Naive thymus-derived CD4-positive, alpha-beta T cell (primary cell): ENCODE measurements at regions of chr6 and their contacts with region 1.

Region 1: GRCh38 chr6:34757687-34758274 is 476 bp downstream of the SNRPC start:
- DNase-seq: no peak
- ATAC-seq: no peak
- H3K4me3 ChIP-seq: peak overlapping the region; percentile 94
- H3K4me3 Mint-ChIP-seq: no peak overlapping the region
- H3K27ac ChIP-seq: peak overlapping the region; percentile 94
- H3K27ac Mint-ChIP-seq: no peak overlapping the region
- H3K4me1 ChIP-seq: peaks cover 7 to 12% of the 10 kb centered on the region in 2 donors
- H3K4me1 Mint-ChIP-seq: peaks cover 3 to 27% (median 14%) of the 10 kb centered on the region in 7 donors
- H3K27me3 ChIP-seq: no peaks in the 10 kb centered on the region
- H3K27me3 Mint-ChIP-seq: no peaks in the 10 kb centered on the region

Region 2: GRCh38 chr6:34425498-34426410 is 332.0 kb before region 1 on chr6 and contains the start of gene RPS10:
- CTCF ChIA-PET with region 1: no interaction called
- POLR2A ChIA-PET with region 1: interaction called, 5 read pairs
- intact Hi-C with region 1: loop called in 1 of 2 experiments (anchors 1 kb)
- DNase-seq: peak; percentile 80 to 94 (median 88)
- ATAC-seq: peak; percentile 100
- H3K4me3 ChIP-seq: peak within 1 kb of the TSS; percentile 98
- H3K4me3 Mint-ChIP-seq: peak within 1 kb of the TSS; percentile 93 to 99 (median 97)
- H3K27ac ChIP-seq: peak within 1 kb of the TSS; percentile 93
- H3K27ac Mint-ChIP-seq: peak within 1 kb of the TSS; percentile 95 to 99 (median 98)
- H3K4me1 ChIP-seq: peaks cover 7 to 18% of the 10 kb centered on the region in 2 donors
- H3K4me1 Mint-ChIP-seq: peaks cover 13 to 43% (median 31%) of the 10 kb centered on the region in 7 donors
- H3K27me3 ChIP-seq: no peaks in the 10 kb centered on the region
- H3K27me3 Mint-ChIP-seq: peaks cover 0 to 3% (median 0%) of the 10 kb centered on the region in 5 donors
- total RNA-seq, gene RPS10: 1,466 to 3,151 (median 2,905) TPM

Region 3: GRCh38 chr6:34610819-34611477 is 146.8 kb before region 1 on chr6:
- CTCF ChIA-PET with region 1: interaction called, 3 read pairs
- POLR2A ChIA-PET with region 1: no interaction called
- intact Hi-C with region 1: loop called in 1 of 2 experiments (anchors 1 kb)
- DNase-seq: no peak
- ATAC-seq: no peak
- H3K4me3 ChIP-seq: no peak overlapping the region
- H3K4me3 Mint-ChIP-seq: no peak overlapping the region
- H3K27ac ChIP-seq: no peak overlapping the region
- H3K27ac Mint-ChIP-seq: peak overlapping the region in 1 of 9 donors; percentile 63
- H3K4me1 ChIP-seq: no peaks in the 10 kb centered on the region
- H3K4me1 Mint-ChIP-seq: peaks cover 2 to 17% (median 13%) of the 10 kb centered on the region in 7 donors
- H3K27me3 ChIP-seq: no peaks in the 10 kb centered on the region
- H3K27me3 Mint-ChIP-seq: no peaks in the 10 kb centered on the region

Region 4: GRCh38 chr6:34656378-34657036 is 101.3 kb before region 1 on chr6:
- CTCF ChIA-PET with region 1: interaction called, 3 read pairs
- POLR2A ChIA-PET with region 1: interaction called, 9 read pairs
- intact Hi-C with region 1: loop called (anchors 1 to 5 kb)
- DNase-seq: peak in 2 of 9 donors; percentile 15 to 25
- ATAC-seq: peak; percentile 70
- H3K4me3 ChIP-seq: peak overlapping the region; percentile 55
- H3K4me3 Mint-ChIP-seq: peak overlapping the region; percentile 68 to 94 (median 86)
- H3K27ac ChIP-seq: peak overlapping the region; percentile 72
- H3K27ac Mint-ChIP-seq: peak overlapping the region; percentile 84 to 97 (median 93)
- H3K4me1 ChIP-seq: peaks cover 8 to 17% of the 10 kb centered on the region in 2 donors
- H3K4me1 Mint-ChIP-seq: peaks cover 26 to 59% (median 55%) of the 10 kb centered on the region in 7 donors
- H3K27me3 ChIP-seq: no peaks in the 10 kb centered on the region
- H3K27me3 Mint-ChIP-seq: no peaks in the 10 kb centered on the region

Region 5: DNA sequence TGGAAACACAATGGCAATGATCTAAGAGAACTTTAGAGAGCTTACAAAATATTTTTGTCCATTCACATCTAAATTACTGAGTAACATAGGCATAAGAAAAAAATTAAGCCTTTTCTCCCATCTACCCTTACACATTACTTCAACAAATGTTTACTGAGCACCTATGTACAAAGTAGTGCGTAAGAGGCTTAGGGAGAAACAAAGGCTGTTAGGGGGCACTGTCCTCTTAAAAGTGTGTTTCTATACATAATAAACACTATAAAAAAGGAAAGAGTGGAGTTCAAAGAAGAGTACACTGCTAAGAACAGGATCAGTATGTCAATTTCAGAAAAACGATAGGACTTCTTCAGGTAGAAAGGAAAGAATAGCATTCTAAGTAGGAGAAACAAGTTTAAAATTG is 73.4 kb before region 1 on chr6:
- CTCF ChIA-PET with region 1: no interaction called
- POLR2A ChIA-PET with region 1: no interaction called
- intact Hi-C with region 1: no loop called
- DNase-seq: no peak
- ATAC-seq: no peak
- H3K4me3 ChIP-seq: no peak overlapping the region
- H3K4me3 Mint-ChIP-seq: no peak overlapping the region
- H3K27ac ChIP-seq: no peak overlapping the region
- H3K27ac Mint-ChIP-seq: peak overlapping the region in 6 of 9 donors; percentile 1 to 59 (median 26)
- H3K4me1 ChIP-seq: no peaks in the 10 kb centered on the region
- H3K4me1 Mint-ChIP-seq: peaks cover 34 to 62% (median 54%) of the 10 kb centered on the region in 7 donors
- H3K27me3 ChIP-seq: no peaks in the 10 kb centered on the region
- H3K27me3 Mint-ChIP-seq: no peaks in the 10 kb centered on the region

Region 6: DNA sequence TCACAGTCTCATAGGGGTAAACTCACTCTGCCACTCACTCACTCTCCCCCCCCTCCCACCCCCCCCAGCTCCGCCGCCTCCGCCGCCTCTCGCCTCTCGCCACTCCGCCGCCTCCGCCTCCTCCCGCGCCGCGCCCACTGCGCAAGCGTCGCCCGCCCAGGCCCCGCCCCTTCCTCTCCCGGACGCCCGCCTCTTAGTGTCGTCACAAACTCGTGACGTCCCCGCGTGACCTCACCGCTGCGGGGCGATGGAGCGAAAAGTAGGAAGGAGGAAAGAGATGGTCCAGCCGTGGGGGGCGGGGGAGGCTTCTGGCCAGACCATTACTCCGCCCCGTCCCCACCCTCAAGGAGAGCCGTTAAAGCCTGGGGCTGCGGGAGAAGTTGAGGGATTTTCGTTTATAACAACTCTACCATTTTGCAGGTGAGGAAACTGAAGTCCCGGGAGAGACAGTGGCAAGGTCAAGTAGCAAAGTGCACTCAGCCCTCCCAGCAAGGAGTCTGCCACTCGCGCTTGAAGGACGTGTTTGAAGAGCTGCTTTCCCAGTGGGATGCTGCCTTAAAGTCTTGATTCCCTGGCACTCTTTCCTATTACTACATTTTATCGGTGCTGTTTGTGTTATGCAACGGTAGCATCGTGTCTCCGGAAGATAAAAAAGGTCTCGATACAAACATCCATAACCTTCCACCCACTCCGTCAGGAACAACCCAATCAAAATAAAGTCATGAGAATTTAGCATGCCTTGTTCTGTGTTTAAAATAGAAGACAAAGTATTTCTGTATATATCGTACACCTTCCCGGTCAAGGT is 60.8 kb before region 1 on chr6 and contains the start of gene ILRUN:
- CTCF ChIA-PET with region 1: no interaction called
- POLR2A ChIA-PET with region 1: interaction called, 8 read pairs
- intact Hi-C with region 1: loop called (anchors 1 kb)
- DNase-seq: peak; percentile 88 to 97 (median 93)
- ATAC-seq: peak; percentile 96
- H3K4me3 ChIP-seq: peak within 1 kb of the TSS; percentile 88
- H3K4me3 Mint-ChIP-seq: peak within 1 kb of the TSS; percentile 95 to 99 (median 98)
- H3K27ac ChIP-seq: peak within 1 kb of the TSS; percentile 94
- H3K27ac Mint-ChIP-seq: peak within 1 kb of the TSS; percentile 88 to 100 (median 99)
- H3K4me1 ChIP-seq: peaks cover 17 to 20% of the 10 kb centered on the region in 2 donors
- H3K4me1 Mint-ChIP-seq: peaks cover 30 to 60% (median 51%) of the 10 kb centered on the region in 7 donors
- H3K27me3 ChIP-seq: no peaks in the 10 kb centered on the region
- H3K27me3 Mint-ChIP-seq: peaks cover 0 to 4% (median 0%) of the 10 kb centered on the region in 5 donors
- total RNA-seq, gene ILRUN: 45.2 to 74.6 (median 53.7) TPM

Region 7: DNA sequence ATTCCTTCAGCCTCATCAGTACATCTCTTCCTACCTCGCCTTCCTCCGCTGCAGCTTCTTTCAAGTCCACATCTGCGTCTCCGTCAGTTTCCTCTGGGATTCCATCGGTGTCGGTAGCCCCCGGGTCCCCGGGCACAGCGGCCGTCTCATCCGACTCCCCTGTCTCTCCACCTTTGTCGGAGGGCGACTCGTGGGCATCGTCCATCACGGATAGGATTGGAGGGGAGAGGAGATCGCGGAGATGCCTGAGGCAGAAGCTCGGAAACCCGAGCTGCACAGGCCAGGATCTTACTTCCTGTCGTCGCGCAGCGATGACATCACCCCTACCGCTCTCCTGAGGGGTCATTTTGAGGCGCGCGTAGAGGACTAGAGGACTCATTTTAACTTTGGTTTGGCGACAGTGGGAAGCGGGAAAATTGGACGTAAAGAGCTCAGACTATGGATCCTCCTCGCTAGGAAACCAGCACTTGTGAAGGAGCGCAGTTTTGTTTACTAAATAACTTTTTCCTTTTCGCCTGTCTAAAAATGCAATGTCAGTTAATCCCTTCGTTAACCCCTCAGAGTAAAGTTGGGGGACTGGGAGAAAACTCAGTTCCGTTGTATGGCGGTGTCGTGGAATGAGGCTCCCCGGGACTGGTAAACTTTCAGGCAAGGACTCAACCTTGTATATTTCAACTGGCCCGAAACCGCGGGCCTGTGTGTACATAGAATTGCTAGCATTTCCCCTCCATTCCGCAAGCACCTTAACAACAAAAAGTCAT is 130.2 kb after region 1 on chr6 and contains the start of gene TAF11:
- CTCF ChIA-PET with region 1: no interaction called
- POLR2A ChIA-PET with region 1: interaction called, 44 read pairs
- intact Hi-C with region 1: loop called in 1 of 2 experiments (anchors 1 kb)
- DNase-seq: peak; percentile 73 to 91 (median 88)
- ATAC-seq: peak; percentile 80
- H3K4me3 ChIP-seq: peak within 1 kb of the TSS; percentile 94
- H3K4me3 Mint-ChIP-seq: peak within 1 kb of the TSS; percentile 92 to 100 (median 100)
- H3K27ac ChIP-seq: peak within 1 kb of the TSS; percentile 95
- H3K27ac Mint-ChIP-seq: peak within 1 kb of the TSS; percentile 99 to 100 (median 100)
- H3K4me1 ChIP-seq: peaks cover 15 to 18% of the 10 kb centered on the region in 2 donors
- H3K4me1 Mint-ChIP-seq: peaks cover 41 to 71% (median 58%) of the 10 kb centered on the region in 7 donors
- H3K27me3 ChIP-seq: no peaks in the 10 kb centered on the region
- H3K27me3 Mint-ChIP-seq: peaks cover 0 to 16% (median 0%) of the 10 kb centered on the region in 5 donors
- total RNA-seq, gene TAF11: 25.4 to 35.1 (median 29.4) TPM